Activated naive CD8-positive, alpha-beta T cell treated with anti-CD3 and anti-CD28 coated beads, Interleukin-2, amount 10 ng/mL, durations not matched to agents 7 days and 5 days (primary cell): ENCODE measurements at regions of chr16 and their contacts with region 1.

Region 1: DNA sequence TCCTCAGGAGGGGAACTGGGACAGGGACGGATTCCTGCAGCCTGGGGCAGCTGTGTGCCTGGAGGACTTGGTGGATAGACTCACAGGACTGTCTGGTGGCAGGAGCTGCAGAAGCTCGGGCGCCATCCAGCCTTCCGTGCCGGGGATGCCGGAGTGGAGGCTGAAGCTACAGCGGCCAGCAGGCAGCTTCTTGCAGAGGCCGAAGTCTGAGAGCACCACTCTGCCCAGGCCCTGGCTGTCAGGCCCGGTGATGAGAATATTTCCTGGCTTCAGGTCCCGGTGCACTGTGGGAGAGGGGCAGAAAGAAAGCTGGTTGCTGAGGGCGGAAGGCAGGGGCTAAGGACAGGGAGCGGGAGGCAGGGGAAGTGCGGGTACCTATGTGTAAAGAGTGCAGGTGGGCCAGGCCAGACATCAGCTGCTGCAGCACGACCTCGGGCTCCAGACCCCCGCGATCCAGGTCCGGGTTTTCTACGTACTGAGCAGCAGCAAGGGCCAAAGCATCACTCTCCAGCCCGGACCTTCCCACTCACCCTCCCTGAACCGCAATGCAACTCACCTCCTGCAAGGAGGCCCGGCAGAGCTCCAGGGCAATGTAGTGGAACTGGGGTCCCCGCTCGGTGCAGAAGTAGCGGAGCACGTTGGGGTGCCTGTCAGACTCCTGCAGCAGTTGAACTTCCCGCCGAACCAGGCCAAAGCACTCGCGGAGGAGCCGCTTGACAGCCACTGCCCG is 16.1 kb downstream of the PLK1 start:
- DNase-seq: no peak
- ATAC-seq: peak; percentile 32
- H3K4me3 Mint-ChIP-seq: peak overlapping the region; percentile 10
- H3K27ac Mint-ChIP-seq: no peak overlapping the region
- H3K4me1 Mint-ChIP-seq: peaks cover 6% of the 10 kb centered on the region
- H3K27me3 Mint-ChIP-seq: peaks cover 4% of the 10 kb centered on the region

Region 2: DNA sequence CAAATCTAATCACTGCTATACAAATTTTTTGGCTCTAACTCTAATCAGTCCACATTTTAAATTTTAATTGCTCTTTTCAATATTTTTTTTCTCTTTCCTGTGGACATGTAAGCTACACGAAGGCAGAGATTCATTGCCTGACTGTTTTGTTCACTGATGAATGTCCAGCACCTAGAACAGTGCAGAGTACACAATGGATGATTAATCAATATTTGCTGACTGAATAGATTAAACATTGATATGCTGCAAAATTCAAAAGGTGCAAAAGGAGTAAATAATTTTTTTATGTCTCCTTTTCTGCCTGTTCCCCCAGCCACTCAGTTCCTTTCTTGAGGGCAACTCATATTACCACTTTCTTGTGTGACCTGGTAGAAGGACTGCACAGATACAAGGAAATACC is 359.9 kb before region 1 on chr16:
- POLR2A ChIA-PET with region 1: interaction called, 10 read pairs
- DNase-seq: no peak
- ATAC-seq: no peak
- H3K4me3 Mint-ChIP-seq: no peak overlapping the region
- H3K27ac Mint-ChIP-seq: no peak overlapping the region
- H3K4me1 Mint-ChIP-seq: no peaks in the 10 kb centered on the region
- H3K27me3 Mint-ChIP-seq: no peaks in the 10 kb centered on the region

Region 3: DNA sequence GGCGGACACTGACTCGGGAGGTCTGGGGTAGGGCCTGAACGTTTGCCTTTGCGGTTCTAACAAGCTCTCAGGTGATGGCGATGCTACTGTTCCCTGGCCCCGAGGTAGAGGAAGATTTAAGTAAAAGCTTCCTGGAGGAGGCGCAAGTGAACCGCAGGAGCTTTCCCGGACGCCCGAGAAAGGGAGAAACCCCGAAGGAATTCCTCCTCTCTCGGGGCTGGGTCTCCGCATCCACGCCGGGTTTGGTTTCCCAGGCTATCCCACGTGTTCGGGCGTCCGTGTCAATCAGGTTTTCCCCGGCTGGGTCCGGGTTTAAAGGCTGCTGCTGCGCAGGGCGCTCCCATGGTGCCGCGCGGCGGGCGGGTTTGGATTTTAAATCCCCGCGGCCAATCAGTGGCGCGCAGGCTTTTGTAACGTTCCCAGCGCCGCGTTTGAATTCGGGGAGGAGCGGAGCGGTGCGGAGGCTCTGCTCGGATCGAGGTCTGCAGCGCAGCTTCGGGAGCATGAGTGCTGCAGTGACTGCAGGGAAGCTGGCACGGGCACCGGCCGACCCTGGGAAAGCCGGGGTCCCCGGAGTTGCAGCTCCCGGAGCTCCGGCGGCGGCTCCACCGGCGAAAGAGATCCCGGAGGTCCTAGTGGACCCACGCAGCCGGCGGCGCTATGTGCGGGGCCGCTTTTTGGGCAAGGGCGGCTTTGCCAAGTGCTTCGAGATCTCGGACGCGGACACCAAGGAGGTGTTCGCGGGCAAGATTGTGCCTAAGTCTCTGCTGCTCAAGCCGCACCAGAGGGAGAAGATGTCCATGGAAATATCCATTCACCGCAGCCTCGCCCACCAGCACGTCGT is 16.2 kb before region 1 on chr16 and contains the start of gene PLK1:
- POLR2A ChIA-PET with region 1: interaction called, 21 read pairs
- DNase-seq: peak; percentile 89
- ATAC-seq: peak; percentile 99
- H3K4me3 Mint-ChIP-seq: peak within 1 kb of the TSS; percentile 98
- H3K27ac Mint-ChIP-seq: peak within 1 kb of the TSS; percentile 85
- H3K4me1 Mint-ChIP-seq: peaks cover 31% of the 10 kb centered on the region
- H3K27me3 Mint-ChIP-seq: no peaks in the 10 kb centered on the region
- total RNA-seq, gene PLK1: 76.5 to 84.8 TPM